B cell (primary cell): ENCODE measurements at regions of chr11 and their contacts with region 1.

Region 1: GRCh38 chr11:8911029-8911826 is at the start of gene AKIP1:
- DNase-seq: peak; percentile 81
- ATAC-seq: peak; percentile 77
- H3K4me3 ChIP-seq: peak within 1 kb of the TSS; percentile 61 to 78 (median 69)
- H3K4me3 Mint-ChIP-seq: peak within 1 kb of the TSS; percentile 96
- H3K27ac ChIP-seq: peak within 1 kb of the TSS; percentile 12 to 58
- H3K27ac Mint-ChIP-seq: peak within 1 kb of the TSS; percentile 86
- H3K4me1 ChIP-seq: peaks cover 18 to 26% of the 10 kb centered on the region in 2 donors
- H3K4me1 Mint-ChIP-seq: peaks cover 46% of the 10 kb centered on the region
- H3K27me3 ChIP-seq: peaks cover 0 to 3% (median 0%) of the 10 kb centered on the region in 4 experiments
- H3K27me3 Mint-ChIP-seq: peaks cover 2% of the 10 kb centered on the region
- CTCF ChIP-seq: no peak
- total RNA-seq, gene AKIP1: 10.7 and 11.5 TPM in 2 replicates

Region 2: GRCh38 chr11:8593935-8594909 is 317.0 kb before region 1 on chr11 and contains the start of gene STK33:
- CTCF ChIA-PET with region 1: no interaction called
- POLR2A ChIA-PET with region 1: no interaction called
- intact Hi-C with region 1: loop called (anchors 5 kb)
- DNase-seq: peak; percentile 70
- ATAC-seq: peak; percentile 87
- H3K4me3 ChIP-seq: peak within 1 kb of the TSS; percentile 30 to 73 (median 66)
- H3K4me3 Mint-ChIP-seq: peak within 1 kb of the TSS; percentile 91
- H3K27ac ChIP-seq: peak within 1 kb of the TSS in 1 of 2 donors; percentile 28
- H3K27ac Mint-ChIP-seq: peak within 1 kb of the TSS; percentile 54
- H3K4me1 ChIP-seq: peaks cover 12% of the 10 kb centered on the region in 2 donors
- H3K4me1 Mint-ChIP-seq: peaks cover 18% of the 10 kb centered on the region
- H3K27me3 ChIP-seq: no peaks in the 10 kb centered on the region
- H3K27me3 Mint-ChIP-seq: peaks cover 9% of the 10 kb centered on the region
- CTCF ChIP-seq: no peak
- total RNA-seq, gene STK33: 9.3 and 13.2 TPM in 2 replicates

Region 3: GRCh38 chr11:8688414-8689362 is 222.5 kb before region 1 on chr11:
- CTCF ChIA-PET with region 1: no interaction called
- POLR2A ChIA-PET with region 1: no interaction called
- intact Hi-C with region 1: loop called (anchors 2 kb)
- DNase-seq: peak; percentile 91
- ATAC-seq: peak; percentile 93
- H3K4me3 ChIP-seq: peak overlapping the region; percentile 56 to 90 (median 77)
- H3K4me3 Mint-ChIP-seq: peak overlapping the region; percentile 98
- H3K27ac ChIP-seq: peak overlapping the region; percentile 83
- H3K27ac Mint-ChIP-seq: peak overlapping the region; percentile 98
- H3K4me1 ChIP-seq: peaks cover 26 to 30% of the 10 kb centered on the region in 2 donors
- H3K4me1 Mint-ChIP-seq: peaks cover 47% of the 10 kb centered on the region
- H3K27me3 ChIP-seq: no peaks in the 10 kb centered on the region
- H3K27me3 Mint-ChIP-seq: no peaks in the 10 kb centered on the region
- CTCF ChIP-seq: no peak

Region 4: GRCh38 chr11:9137293-9138132 is 226.3 kb after region 1 on chr11:
- CTCF ChIA-PET with region 1: interaction called, 27 read pairs
- POLR2A ChIA-PET with region 1: no interaction called
- intact Hi-C with region 1: no loop called
- DNase-seq: peak; percentile 68
- ATAC-seq: peak; percentile 86
- H3K4me3 ChIP-seq: no peak overlapping the region
- H3K4me3 Mint-ChIP-seq: no peak overlapping the region
- H3K27ac ChIP-seq: no peak overlapping the region
- H3K27ac Mint-ChIP-seq: no peak overlapping the region
- H3K4me1 ChIP-seq: no peaks in the 10 kb centered on the region
- H3K4me1 Mint-ChIP-seq: peaks cover 3% of the 10 kb centered on the region
- H3K27me3 ChIP-seq: no peaks in the 10 kb centered on the region
- H3K27me3 Mint-ChIP-seq: no peaks in the 10 kb centered on the region
- CTCF ChIP-seq: peak; percentile 94